SK-N-SH (cell line): ENCODE measurements at regions of chr2 and their contacts with region 1.

Region 1: GRCh38 chr2:109510136-109511028 is 103.4 kb downstream of the SEPTIN10 start:
- DNase-seq: peak; percentile 87
- H3K4me3 ChIP-seq: no peak overlapping the region; a peak in 1 of 4 replicates
- H3K27ac ChIP-seq: no peak overlapping the region
- H3K4me1 ChIP-seq: peaks cover 4 to 19% of the 10 kb centered on the region in 2 experiments; a peak in 2 of 4 replicates
- H3K27me3 ChIP-seq: no peaks in the 10 kb centered on the region
- CTCF ChIP-seq: peak; percentile 86
- EP300 ChIP-seq: no peak
- RAD21 ChIP-seq: peak; percentile 97

Region 2: DNA sequence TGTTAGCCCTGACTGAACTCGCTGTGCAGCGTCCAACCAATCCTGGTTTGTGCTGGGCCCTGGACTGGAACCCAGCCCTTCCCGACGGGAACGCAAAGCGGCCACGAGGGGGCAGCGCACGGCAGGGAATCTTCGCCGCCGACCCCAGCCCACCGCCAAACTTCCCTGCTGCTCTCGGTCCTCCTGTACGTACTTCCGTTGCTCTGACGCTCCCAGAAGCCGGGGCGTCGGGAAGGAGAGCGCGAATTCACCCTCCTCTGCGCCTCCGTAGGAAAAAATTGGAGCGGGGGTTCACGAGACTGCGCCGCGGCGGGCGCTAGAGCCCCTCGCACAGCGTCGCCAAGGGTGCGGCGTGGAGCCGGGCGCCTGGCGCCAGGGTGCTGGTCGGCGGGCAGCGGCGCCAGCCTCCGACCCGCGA is 382.3 kb before region 1 on chr2:
- CTCF ChIA-PET with region 1: interaction called, 160 read pairs
- POLR2A ChIA-PET with region 1: interaction called, 3 read pairs
- DNase-seq: peak; percentile 96
- H3K4me3 ChIP-seq: peak overlapping the region; percentile 70 to 80
- H3K27ac ChIP-seq: peak overlapping the region; percentile 53 to 56; a peak in 3 of 4 replicates
- H3K4me1 ChIP-seq: peaks cover 19 to 29% of the 10 kb centered on the region in 2 experiments
- H3K27me3 ChIP-seq: no peaks in the 10 kb centered on the region
- CTCF ChIP-seq: peak; percentile 90; the same call in 1 of the 2 replicates
- EP300 ChIP-seq: no peak
- RAD21 ChIP-seq: peak; percentile 98

Region 3: GRCh38 chr2:109261906-109262631 is 248.3 kb before region 1 on chr2:
- CTCF ChIA-PET with region 1: interaction called, 10 read pairs
- POLR2A ChIA-PET with region 1: no interaction called
- DNase-seq: no peak
- H3K4me3 ChIP-seq: no peak overlapping the region
- H3K27ac ChIP-seq: no peak overlapping the region
- H3K4me1 ChIP-seq: peaks cover 0 to 54% of the 10 kb centered on the region in 2 experiments; a peak in 1 of 4 replicates
- H3K27me3 ChIP-seq: no peaks in the 10 kb centered on the region
- CTCF ChIP-seq: no peak
- EP300 ChIP-seq: no peak
- RAD21 ChIP-seq: no peak

Region 4: DNA sequence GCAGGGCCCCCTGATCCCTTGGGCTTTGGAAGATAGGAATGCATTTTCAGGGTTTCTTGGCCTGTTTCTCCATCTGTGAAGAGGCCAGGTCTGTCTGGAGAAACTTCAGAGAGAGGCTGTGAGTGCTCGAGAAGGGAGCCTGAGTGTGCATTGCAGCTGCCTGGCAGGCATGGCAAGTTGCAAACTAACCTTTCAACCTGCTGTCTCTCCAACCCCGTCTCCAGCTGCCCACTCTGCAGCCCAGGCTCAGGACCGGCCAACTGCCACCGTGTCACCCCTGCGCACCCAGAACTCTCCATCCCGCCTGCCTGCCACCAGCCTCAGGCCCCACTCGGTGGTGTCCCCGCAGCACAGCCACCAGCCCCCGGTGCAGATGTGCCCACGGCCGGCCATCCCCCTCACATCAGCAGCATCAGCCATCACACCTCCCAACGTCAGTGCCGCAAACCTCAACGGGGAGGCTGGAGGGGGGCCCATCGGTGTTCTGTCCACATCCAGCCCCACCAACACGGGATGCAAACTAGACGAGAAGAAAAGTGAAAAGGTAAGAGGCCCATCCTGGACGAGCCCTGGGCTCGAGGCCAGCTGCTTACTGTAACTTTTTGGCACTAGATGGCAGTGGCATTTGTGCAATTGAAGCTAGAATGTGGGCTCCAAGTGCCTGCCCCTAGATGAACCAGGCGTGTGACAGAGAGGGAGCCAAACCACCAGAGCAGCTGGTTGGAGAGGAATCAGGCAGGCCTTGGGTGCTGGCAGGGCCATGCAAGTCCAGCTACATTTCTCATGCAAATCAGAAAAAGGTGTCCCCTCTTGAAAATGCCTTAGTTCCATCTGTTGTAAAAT is 61.2 kb before region 1 on chr2:
- CTCF ChIA-PET with region 1: interaction called, 34 read pairs
- POLR2A ChIA-PET with region 1: no interaction called
- DNase-seq: peak; percentile 55
- H3K4me3 ChIP-seq: no peak overlapping the region
- H3K27ac ChIP-seq: no peak overlapping the region; a peak in 1 of 4 replicates
- H3K4me1 ChIP-seq: peaks cover 13 to 50% of the 10 kb centered on the region in 2 experiments; a peak in 3 of 4 replicates
- H3K27me3 ChIP-seq: no peaks in the 10 kb centered on the region
- CTCF ChIP-seq: no peak
- EP300 ChIP-seq: no peak
- RAD21 ChIP-seq: peak; percentile 56

Region 5: DNA sequence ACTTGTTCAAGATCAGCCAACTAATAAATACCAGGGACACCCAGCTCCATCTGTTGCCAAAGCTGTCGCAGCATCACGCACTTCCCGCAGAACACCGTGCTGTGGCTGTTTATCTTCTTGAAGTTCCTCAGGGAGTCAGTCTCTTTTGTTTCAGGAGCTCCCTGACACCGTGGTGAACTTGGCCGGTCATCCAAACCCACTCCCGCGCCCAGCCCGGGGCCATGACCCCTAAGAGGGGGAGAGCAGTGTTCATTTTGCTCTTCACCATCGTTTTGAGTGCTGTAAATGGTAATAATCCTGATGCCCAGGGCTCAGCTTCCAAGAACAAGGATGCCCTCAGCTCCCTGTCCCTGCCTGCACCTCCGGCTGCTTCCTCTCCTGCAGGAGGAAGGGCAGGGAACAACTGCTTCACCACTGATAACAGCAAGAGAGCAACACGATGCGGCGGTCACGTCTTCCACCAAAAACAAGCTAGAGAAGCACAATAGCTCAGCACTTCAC is 28.0 kb before region 1 on chr2:
- CTCF ChIA-PET with region 1: interaction called, 24 read pairs
- POLR2A ChIA-PET with region 1: no interaction called
- DNase-seq: no peak
- H3K4me3 ChIP-seq: no peak overlapping the region
- H3K27ac ChIP-seq: no peak overlapping the region
- H3K4me1 ChIP-seq: peaks cover under 1 to 10% of the 10 kb centered on the region in 2 experiments; a peak in 1 of 4 replicates
- H3K27me3 ChIP-seq: no peaks in the 10 kb centered on the region
- CTCF ChIP-seq: no peak
- EP300 ChIP-seq: no peak
- RAD21 ChIP-seq: no peak

Region 6: DNA sequence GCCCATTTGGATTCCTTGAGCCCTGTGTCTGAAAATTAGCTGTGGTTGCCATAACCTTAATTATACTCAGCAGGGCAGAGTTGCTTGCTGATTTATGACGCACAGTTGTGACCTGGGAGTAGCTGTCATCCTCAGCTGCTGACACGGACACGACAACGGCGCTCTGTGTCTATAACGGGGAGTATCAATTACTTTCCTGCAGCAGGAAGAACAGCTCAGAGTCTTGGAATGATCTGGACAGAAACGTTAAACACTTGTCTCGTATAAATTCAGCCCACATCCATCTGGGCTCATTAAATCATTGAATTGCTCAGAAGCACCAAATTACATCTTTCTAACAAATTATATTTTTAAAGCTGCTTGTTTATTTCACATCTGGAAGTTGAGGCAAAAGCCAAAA is 12.9 kb before region 1 on chr2:
- CTCF ChIA-PET with region 1: interaction called, 29 read pairs
- POLR2A ChIA-PET with region 1: no interaction called
- DNase-seq: no peak
- H3K4me3 ChIP-seq: no peak overlapping the region
- H3K27ac ChIP-seq: peak overlapping the region; percentile 33 to 60; a peak in 2 of 4 replicates
- H3K4me1 ChIP-seq: peaks cover 13 to 24% of the 10 kb centered on the region in 2 experiments; a peak in 3 of 4 replicates
- H3K27me3 ChIP-seq: no peaks in the 10 kb centered on the region
- CTCF ChIP-seq: no peak
- EP300 ChIP-seq: peak in 1 of 2 experiments; percentile 19; a peak in 1 of 4 replicates
- RAD21 ChIP-seq: no peak

Region 7: GRCh38 chr2:109529532-109530449 is 19.4 kb after region 1 on chr2:
- CTCF ChIA-PET with region 1: interaction called, 15 read pairs
- POLR2A ChIA-PET with region 1: no interaction called
- DNase-seq: no peak
- H3K4me3 ChIP-seq: no peak overlapping the region
- H3K27ac ChIP-seq: no peak overlapping the region
- H3K4me1 ChIP-seq: peaks cover 0 to 10% of the 10 kb centered on the region in 2 experiments; a peak in 1 of 4 replicates
- H3K27me3 ChIP-seq: no peaks in the 10 kb centered on the region
- CTCF ChIP-seq: no peak
- EP300 ChIP-seq: no peak
- RAD21 ChIP-seq: no peak

Region 8: GRCh38 chr2:109563980-109564550 is 53.7 kb after region 1 on chr2:
- CTCF ChIA-PET with region 1: no interaction called
- POLR2A ChIA-PET with region 1: no interaction called
- DNase-seq: no peak
- H3K4me3 ChIP-seq: no peak overlapping the region
- H3K27ac ChIP-seq: peak overlapping the region in 1 of 2 experiments; percentile 10; a peak in 2 of 4 replicates
- H3K4me1 ChIP-seq: peaks cover 0 to 5% of the 10 kb centered on the region in 2 experiments; a peak in 1 of 4 replicates
- H3K27me3 ChIP-seq: no peaks in the 10 kb centered on the region
- CTCF ChIP-seq: no peak
- EP300 ChIP-seq: no peak
- RAD21 ChIP-seq: no peak